ENCODE measurements at regions of chr12 and their contacts with region 1.

Region 1: DNA sequence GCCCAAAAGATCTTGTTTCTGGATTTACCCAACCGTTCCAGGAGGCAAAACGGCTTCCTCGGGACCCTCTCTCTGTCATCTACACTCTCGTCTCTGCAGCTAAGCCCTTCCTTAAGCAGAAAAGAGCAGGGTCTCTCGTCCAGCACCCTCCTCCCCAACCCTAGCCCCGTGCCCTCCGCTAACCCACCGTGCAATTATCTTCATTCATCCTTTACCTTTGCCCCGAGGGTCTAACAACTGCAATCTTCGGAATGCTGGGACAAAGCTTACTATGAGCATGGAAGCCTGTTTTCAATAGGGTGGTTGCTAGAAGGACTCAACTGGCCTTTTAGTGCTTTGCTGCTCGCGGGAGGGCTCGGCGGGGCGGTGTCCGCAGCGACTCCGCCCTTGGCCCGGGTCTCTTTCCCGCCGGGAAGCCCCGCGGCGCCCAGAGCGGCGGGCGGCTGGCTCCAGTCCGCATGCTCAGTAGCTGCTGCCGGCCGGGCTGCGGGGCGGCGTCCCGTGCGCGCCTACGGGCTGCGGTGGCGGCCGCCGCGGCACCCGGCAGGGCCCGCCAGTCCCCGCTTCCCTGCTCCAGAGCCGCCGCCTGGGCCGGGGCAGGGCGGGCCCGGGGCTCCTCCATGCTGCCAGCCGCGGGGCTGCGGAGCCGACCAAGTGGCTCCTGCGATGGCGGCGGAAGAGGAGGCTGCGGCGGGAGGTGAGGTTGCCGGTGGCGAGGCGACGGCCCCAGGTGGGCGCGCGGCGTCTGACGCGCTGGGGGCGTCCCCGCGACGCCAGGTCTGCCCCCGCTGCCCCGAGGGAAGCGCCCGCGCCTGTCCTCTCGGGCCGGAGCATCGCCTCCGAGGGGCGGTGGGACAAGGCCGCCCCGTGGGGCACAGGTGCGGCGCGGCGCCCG is at the start of gene BMAL2:
- DNase-seq: peak in 8 of 9 donors; percentile 12 to 70 (median 16)
- ATAC-seq: peak; percentile 62
- H3K4me3 ChIP-seq: peak within 1 kb of the TSS; percentile 46
- H3K4me3 Mint-ChIP-seq: peak within 1 kb of the TSS; percentile 80 to 97 (median 88)
- H3K27ac ChIP-seq: no peak within 1 kb of the TSS
- H3K27ac Mint-ChIP-seq: peak within 1 kb of the TSS in 1 of 9 donors; percentile 94
- H3K4me1 ChIP-seq: peaks cover 4% of the 10 kb centered on the region in 2 donors
- H3K4me1 Mint-ChIP-seq: peaks cover 7 to 51% (median 15%) of the 10 kb centered on the region in 7 donors
- H3K27me3 ChIP-seq: peaks cover 0 to 8% of the 10 kb centered on the region in 2 donors
- H3K27me3 Mint-ChIP-seq: peaks cover 7 to 48% (median 46%) of the 10 kb centered on the region in 5 donors
- total RNA-seq, gene BMAL2: 0.19 to 37.7 (median 0.41) TPM in 4 of 5 experiments, not detected in the other

Region 2: DNA sequence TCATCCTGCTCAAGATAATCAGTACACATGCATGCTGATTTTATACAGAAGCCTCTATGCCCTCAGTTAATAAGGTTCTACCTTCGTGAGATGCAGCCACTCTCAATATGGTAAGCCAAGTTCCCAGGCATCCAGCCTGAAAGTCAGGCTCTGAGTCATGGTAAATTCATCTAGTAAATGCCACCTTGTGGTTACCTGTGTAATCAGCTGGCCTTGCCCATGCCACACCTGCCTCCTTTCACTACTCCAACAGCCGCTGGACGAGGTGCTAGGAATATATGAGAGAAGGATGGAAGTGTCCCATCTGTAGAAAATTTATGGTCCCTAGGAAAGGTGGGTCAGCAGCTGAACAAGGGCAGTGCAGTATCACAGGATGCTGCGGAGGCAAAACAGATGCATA is 930.0 kb before region 1 on chr12:
- CTCF ChIA-PET with region 1: no interaction called
- POLR2A ChIA-PET with region 1: no interaction called
- intact Hi-C with region 1: no loop called
- DNase-seq: no peak
- ATAC-seq: no peak
- H3K4me3 ChIP-seq: no peak overlapping the region
- H3K4me3 Mint-ChIP-seq: no peak overlapping the region
- H3K27ac ChIP-seq: no peak overlapping the region
- H3K27ac Mint-ChIP-seq: no peak overlapping the region
- H3K4me1 ChIP-seq: no peaks in the 10 kb centered on the region
- H3K4me1 Mint-ChIP-seq: no peaks in the 10 kb centered on the region
- H3K27me3 ChIP-seq: no peaks in the 10 kb centered on the region
- H3K27me3 Mint-ChIP-seq: no peaks in the 10 kb centered on the region

Region 3: GRCh38 chr12:26878661-26879119 is 454.0 kb before region 1 on chr12:
- CTCF ChIA-PET with region 1: no interaction called
- POLR2A ChIA-PET with region 1: interaction called, 11 read pairs
- intact Hi-C with region 1: no loop called
- DNase-seq: no peak
- ATAC-seq: no peak
- H3K4me3 ChIP-seq: no peak overlapping the region
- H3K4me3 Mint-ChIP-seq: no peak overlapping the region
- H3K27ac ChIP-seq: no peak overlapping the region
- H3K27ac Mint-ChIP-seq: peak overlapping the region in 1 of 9 donors; percentile 32
- H3K4me1 ChIP-seq: no peaks in the 10 kb centered on the region
- H3K4me1 Mint-ChIP-seq: peaks cover 0 to 3% (median 0%) of the 10 kb centered on the region in 7 donors
- H3K27me3 ChIP-seq: no peaks in the 10 kb centered on the region
- H3K27me3 Mint-ChIP-seq: peaks cover 0 to 26% (median 6%) of the 10 kb centered on the region in 5 donors

Region 4: GRCh38 chr12:27412047-27412446 is 79.4 kb after region 1 on chr12:
- CTCF ChIA-PET with region 1: no interaction called
- POLR2A ChIA-PET with region 1: no interaction called
- intact Hi-C with region 1: no loop called
- DNase-seq: no peak
- ATAC-seq: no peak
- H3K4me3 ChIP-seq: no peak overlapping the region
- H3K4me3 Mint-ChIP-seq: no peak overlapping the region
- H3K27ac ChIP-seq: no peak overlapping the region
- H3K27ac Mint-ChIP-seq: no peak overlapping the region
- H3K4me1 ChIP-seq: no peaks in the 10 kb centered on the region
- H3K4me1 Mint-ChIP-seq: no peaks in the 10 kb centered on the region
- H3K27me3 ChIP-seq: no peaks in the 10 kb centered on the region
- H3K27me3 Mint-ChIP-seq: no peaks in the 10 kb centered on the region

Region 5: DNA sequence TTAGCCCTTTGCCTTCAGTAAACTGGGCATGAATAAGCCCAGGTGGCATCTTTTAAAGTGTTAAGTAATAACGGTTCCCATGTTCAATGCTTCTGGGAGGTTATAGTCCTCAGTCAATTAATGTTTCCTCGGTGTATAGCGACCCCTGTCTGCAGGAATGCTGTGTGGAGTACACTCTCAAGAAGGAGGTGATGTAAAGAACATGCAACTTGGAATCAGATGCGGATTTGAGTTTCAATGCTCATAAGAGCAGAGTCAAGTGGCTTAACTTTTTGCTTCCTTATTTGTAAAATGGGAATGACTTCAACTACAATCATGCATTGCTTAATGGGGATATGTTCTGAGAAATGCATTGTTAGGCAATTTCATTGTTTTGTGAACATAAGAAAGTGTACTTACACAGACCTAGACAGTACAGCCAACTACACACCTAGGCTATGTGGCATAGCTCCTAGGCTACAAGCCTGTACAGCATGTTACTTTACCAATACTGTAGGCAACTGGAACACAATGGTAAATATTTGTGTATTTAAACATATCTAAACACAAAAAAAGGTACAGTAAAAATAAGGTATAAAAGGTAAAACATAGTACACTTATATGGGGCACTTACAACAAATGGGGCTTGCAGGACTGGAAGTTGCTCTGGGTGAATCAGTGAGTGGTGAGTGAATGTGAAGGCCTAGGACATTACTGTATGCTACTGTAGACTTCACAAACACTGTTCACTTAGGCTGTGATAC is 371.2 kb after region 1 on chr12:
- CTCF ChIA-PET with region 1: no interaction called
- POLR2A ChIA-PET with region 1: no interaction called
- intact Hi-C with region 1: loop called in 1 of 2 experiments (anchors 5 kb)
- DNase-seq: peak; percentile 11 to 64 (median 56)
- ATAC-seq: peak; percentile 97
- H3K4me3 ChIP-seq: no peak overlapping the region
- H3K4me3 Mint-ChIP-seq: no peak overlapping the region
- H3K27ac ChIP-seq: no peak overlapping the region
- H3K27ac Mint-ChIP-seq: no peak overlapping the region
- H3K4me1 ChIP-seq: no peaks in the 10 kb centered on the region
- H3K4me1 Mint-ChIP-seq: peaks cover 0 to 3% (median 0%) of the 10 kb centered on the region in 7 donors
- H3K27me3 ChIP-seq: no peaks in the 10 kb centered on the region
- H3K27me3 Mint-ChIP-seq: peaks cover 7 to 22% (median 13%) of the 10 kb centered on the region in 5 donors